Activated naive CD4-positive, alpha-beta T cell treated with anti-CD3 and anti-CD28 coated beads for 36 hours (primary cell): ENCODE measurements at regions of chr5 and their contacts with region 1.

Region 1: DNA sequence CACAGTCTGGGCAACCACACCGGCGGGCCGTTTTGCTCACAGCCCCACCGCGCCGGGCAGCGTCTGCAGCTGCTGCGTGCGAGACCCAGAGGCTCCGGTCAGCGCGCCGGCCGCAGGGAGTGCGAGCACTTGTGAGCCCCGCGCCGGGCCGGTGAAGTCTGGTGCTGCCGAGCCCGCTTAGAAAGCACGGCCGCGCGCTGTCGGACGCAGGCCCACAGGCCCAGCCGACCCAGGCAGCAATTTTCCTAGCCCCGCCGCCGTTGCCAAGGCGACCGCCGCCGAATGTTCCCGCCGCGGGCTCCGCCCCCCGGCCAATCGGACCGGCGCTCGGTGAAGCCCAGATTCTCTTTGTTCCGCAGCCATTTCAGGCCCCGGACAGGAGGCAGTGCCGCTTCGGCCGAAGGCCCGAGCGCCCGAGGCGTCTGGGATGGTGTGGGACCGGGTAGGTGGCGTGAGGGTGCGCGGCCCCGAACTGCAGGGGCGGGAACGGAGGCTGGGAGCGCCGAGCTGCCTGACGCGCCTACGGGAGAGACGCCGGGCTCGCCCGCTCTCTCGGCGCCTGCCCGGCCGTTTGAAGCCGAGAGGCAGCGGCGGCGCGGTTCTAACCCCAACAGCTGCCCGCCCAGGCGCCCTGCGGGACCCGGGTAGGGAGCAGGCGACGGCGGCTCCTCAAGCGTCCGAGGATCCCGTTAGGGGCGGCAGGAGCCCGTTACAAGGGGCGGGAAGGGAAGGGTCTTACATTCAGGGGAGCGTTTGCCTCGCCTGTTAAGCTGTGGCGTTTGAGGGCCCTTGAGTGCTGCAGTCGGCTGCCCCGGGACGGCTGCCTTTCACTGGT is at the start of gene TNPO1:
- DNase-seq: peak; percentile 82
- H3K4me3 Mint-ChIP-seq: peak within 1 kb of the TSS; percentile 81
- H3K27ac Mint-ChIP-seq: peak within 1 kb of the TSS; percentile 70
- H3K4me1 Mint-ChIP-seq: peaks cover 14% of the 10 kb centered on the region
- H3K27me3 Mint-ChIP-seq: peaks cover 9% of the 10 kb centered on the region
- total RNA-seq, gene TNPO1: 105 to 107 TPM

Region 2: GRCh38 chr5:72307968-72308852 is 508.3 kb before region 1 on chr5:
- CTCF ChIA-PET with region 1: no interaction called
- intact Hi-C with region 1: loop called (anchors 5 kb)
- DNase-seq: peak; percentile 94
- H3K4me3 Mint-ChIP-seq: peak overlapping the region; percentile 85
- H3K27ac Mint-ChIP-seq: peak overlapping the region; percentile 92
- H3K4me1 Mint-ChIP-seq: peaks cover 32% of the 10 kb centered on the region
- H3K27me3 Mint-ChIP-seq: no peaks in the 10 kb centered on the region

Region 3: DNA sequence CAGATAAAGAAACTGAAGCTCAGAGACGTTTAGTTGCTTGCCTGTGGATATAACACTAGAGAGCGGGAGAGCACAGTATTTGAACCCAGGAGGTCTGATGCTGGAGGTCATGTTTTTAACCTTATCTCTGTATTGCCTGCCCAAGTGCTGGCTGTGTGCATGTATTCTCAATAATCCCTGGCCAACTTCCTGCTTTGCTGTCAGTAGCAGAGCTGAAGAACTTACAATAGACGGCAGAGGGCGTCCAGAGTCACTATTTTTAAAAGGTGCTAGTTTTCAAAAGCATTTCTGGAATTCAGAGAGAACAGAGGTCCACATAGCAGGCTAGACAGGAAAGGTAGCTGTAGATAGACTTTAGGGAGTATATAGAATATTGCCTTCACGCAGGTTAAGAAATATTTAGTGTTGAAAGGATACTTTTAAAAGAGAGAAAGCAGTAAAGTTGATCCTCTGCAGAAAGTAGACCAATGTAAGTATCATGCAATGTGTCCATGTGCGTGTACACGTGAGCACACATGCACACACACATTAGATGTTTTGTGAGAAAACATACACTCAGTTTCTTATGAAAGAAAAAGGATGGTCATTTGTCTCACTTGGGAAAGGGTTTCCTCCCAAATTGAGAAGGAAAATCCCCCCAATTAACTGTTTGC is 450.1 kb before region 1 on chr5:
- CTCF ChIA-PET with region 1: interaction called, 6 read pairs
- intact Hi-C with region 1: loop called (anchors 1 kb)
- DNase-seq: peak; percentile 61
- H3K4me3 Mint-ChIP-seq: no peak overlapping the region
- H3K27ac Mint-ChIP-seq: no peak overlapping the region
- H3K4me1 Mint-ChIP-seq: no peaks in the 10 kb centered on the region
- H3K27me3 Mint-ChIP-seq: no peaks in the 10 kb centered on the region

Region 4: DNA sequence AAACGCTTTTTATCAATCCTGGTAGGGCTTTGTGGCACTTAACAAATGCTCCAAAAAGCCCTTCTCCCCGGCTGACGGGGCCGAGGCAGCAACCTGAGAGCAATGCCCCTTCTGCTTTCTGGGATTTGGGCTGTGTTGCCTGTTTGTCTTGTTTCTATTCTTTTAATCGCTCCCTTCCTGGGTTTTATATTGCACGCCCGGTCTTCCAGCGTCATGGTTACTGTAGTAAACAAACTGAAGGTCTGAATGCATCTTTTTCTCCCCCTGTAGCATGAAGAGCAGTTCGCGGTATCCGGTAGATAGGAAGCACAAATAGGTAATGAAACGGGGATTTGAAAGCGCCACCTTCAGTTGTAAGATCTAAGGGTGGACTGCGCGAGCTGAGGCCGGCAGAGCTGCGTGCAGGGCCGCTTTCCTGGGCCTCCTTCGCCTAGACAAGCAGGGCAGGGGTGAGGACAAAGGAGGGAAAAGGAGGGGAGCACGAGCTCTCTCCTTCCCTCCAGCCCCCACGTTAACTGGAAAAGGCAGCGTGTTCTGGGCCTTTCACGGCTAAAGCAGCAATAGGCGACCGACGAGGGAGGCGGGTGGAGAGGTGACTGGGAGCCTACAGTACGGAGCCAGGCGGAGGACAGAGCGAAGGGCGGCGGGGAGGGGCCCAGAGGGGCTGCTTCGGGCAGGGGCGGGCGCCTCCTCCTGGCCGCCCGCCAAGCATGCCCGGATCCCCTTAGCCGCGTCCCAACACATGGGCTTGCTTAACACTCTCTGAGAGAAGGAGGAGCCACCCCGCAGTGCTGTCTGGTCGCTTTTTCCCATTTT is 260.0 kb before region 1 on chr5:
- CTCF ChIA-PET with region 1: no interaction called
- intact Hi-C with region 1: loop called (anchors 2 kb)
- DNase-seq: peak; percentile 46
- H3K4me3 Mint-ChIP-seq: peak overlapping the region; percentile 59
- H3K27ac Mint-ChIP-seq: no peak overlapping the region
- H3K4me1 Mint-ChIP-seq: peaks cover 25% of the 10 kb centered on the region
- H3K27me3 Mint-ChIP-seq: peaks cover 50% of the 10 kb centered on the region

Region 5: DNA sequence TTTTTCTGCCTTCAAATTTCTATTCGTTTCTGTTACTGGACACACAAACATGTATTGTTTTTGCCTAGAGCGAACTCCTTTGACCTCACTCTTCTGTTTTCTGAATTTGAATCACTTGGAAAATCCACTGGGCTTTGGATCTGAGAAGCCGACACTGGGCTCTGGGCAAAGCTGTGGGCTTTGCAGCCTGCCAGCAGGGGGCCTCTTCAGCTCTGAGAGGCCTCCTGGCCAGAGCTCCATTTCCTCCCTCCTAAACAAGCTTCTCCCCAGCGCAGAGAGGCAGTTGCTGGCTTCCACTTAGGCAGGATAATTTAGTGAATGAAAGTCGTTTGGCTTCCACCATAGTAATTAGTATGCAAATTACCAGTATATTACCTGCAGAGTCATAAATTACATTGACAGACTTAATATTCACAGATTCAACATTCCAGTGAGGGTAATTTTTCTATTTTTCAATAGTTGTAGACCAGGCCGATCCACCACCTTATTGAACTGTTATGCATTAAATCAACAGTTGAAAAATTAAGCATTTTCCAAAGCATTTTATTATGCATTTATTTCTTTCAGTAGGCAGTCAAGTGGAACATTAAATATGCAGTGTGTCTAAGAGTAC is 205.3 kb before region 1 on chr5:
- CTCF ChIA-PET with region 1: interaction called, 36 read pairs
- intact Hi-C with region 1: loop called (anchors 1 kb)
- DNase-seq: peak; percentile 60
- H3K4me3 Mint-ChIP-seq: no peak overlapping the region
- H3K27ac Mint-ChIP-seq: no peak overlapping the region
- H3K4me1 Mint-ChIP-seq: peaks cover 3% of the 10 kb centered on the region
- H3K27me3 Mint-ChIP-seq: peaks cover 2% of the 10 kb centered on the region

Region 6: GRCh38 chr5:72847989-72848473 is 31.5 kb after region 1 on chr5:
- CTCF ChIA-PET with region 1: interaction called, 5 read pairs
- intact Hi-C with region 1: loop called (anchors 1 kb)
- DNase-seq: peak; percentile 90
- H3K4me3 Mint-ChIP-seq: peak overlapping the region; percentile 97
- H3K27ac Mint-ChIP-seq: peak overlapping the region; percentile 97
- H3K4me1 Mint-ChIP-seq: peaks cover 49% of the 10 kb centered on the region
- H3K27me3 Mint-ChIP-seq: no peaks in the 10 kb centered on the region

Region 7: DNA sequence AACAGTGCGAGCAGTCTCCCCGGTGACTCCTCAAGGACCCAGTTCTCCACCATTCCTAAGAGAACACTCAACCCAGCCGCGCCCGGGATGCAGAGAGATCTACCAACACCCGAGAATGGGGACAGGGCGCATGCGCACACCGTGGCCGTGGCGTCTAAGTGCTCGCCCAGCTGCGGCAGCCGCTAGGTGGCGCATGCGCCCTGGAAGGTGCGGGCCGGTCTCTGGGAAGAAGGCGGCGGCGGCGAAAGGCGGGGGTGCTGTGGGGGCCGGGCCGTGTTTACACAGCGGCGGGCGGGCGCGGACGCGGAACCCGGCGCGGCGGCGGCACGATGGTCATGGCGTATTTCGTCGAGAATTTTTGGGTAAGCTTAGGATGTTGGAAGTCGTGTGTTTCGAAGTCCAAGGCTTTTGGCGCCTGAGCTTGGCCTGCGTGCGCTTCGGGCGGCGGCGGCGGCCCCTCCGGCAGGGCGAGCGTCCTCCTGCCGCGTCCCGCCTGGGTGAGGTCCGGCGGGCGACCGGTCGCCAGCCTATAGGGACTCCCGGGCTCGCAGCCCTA is 139.3 kb after region 1 on chr5 and contains the start of gene FCHO2:
- CTCF ChIA-PET with region 1: no interaction called
- intact Hi-C with region 1: loop called (anchors 2 kb)
- DNase-seq: peak; percentile 95
- H3K4me3 Mint-ChIP-seq: peak within 1 kb of the TSS; percentile 91
- H3K27ac Mint-ChIP-seq: peak within 1 kb of the TSS; percentile 63
- H3K4me1 Mint-ChIP-seq: peaks cover 10% of the 10 kb centered on the region
- H3K27me3 Mint-ChIP-seq: peaks cover 47% of the 10 kb centered on the region
- total RNA-seq, gene FCHO2: 0.54 to 0.93 TPM